ENCODE measurements at regions of chr6 and their contacts with region 1.

Region 1: DNA sequence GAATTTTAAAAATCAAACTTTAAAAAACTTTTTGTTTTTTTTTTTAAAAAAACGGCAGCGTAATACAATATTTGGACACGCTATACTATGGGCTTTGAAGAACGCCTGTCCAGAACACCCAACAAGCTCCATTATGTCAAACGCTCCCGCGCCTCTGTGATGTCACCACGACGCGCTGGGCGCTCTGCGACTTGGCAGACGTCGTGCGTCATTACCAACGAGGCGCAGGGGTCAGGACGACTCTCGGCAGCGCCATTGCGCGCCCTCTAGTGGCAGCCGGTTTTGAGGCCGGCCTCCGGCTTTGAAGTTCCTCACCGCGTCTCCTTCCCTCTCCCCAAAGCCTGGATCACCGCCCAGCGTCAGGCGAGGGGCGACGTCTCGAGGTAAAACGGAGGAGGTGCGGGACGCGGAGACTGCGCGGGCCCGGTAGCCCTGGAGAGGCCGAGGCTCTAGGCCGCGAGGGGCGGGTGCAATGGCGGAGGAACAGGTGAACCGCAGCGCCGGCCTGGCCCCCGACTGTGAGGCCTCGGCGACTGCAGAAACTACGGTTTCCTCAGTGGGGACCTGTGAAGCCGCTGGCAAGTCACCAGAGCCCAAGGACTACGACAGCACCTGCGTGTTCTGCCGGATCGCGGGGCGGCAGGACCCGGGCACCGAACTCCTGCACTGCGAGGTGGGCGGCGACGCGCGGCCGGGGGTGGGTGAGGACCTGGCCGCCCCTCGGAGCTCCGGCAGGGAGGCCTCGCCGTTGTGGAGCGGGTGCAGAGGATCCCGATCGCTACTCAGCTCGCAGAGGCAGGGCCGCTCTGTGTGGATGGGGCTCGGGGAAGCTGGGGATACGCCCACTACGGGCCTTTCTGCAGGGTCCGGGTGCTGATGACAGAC is at the start of gene HINT3:
- DNase-seq: peak; percentile 96 to 98 (median 97)
- H3K4me3 ChIP-seq: peak within 1 kb of the TSS; percentile 60 to 94
- H3K4me3 Mint-ChIP-seq: peak within 1 kb of the TSS in 2 of 8 donors; percentile 66 to 67
- H3K27ac ChIP-seq: peak within 1 kb of the TSS; percentile 95
- H3K27ac Mint-ChIP-seq: no peak within 1 kb of the TSS
- H3K4me1 ChIP-seq: peaks cover 44% of the 10 kb centered on the region
- H3K4me1 Mint-ChIP-seq: peaks cover 3 to 25% (median 7%) of the 10 kb centered on the region in 4 donors
- H3K27me3 ChIP-seq: no peaks in the 10 kb centered on the region
- H3K27me3 Mint-ChIP-seq: no peaks in the 10 kb centered on the region
- total RNA-seq, gene HINT3: 10.6 to 12.7 TPM

Region 2: DNA sequence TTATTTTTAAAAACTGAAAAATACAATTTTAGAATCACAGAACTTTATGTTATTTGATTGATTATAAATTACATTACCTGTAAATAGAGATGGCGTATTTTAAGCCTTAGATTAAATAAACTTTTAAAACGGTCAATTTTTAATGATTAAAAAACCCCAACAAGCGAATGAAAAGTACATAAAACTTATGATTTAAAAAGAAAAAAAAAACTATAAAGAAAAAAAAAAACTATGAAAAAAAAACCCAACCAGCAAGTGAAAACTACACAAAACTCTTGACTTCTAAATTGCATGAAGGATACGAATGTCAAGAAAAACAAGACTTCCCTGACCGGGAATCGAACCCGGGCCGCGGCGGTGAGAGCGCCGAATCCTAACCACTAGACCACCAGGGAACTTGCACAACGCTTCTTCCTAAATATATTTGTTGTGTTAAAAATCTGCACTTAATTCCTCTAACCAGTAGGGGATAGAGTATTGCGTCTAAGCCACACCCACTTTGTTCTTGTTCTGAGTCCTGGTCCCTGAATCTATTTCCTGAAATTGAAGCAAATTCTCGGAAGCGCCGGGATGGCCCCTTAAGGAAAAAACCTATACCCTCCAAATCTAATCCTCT is 176.7 kb before region 1 on chr6:
- CTCF ChIA-PET with region 1: interaction called, 78 read pairs
- POLR2A ChIA-PET with region 1: interaction called, 65 read pairs
- intact Hi-C with region 1: loop called (anchors 1 kb)
- DNase-seq: peak; percentile 87 to 94 (median 92)
- H3K4me3 ChIP-seq: peak overlapping the region; percentile 69 to 92
- H3K4me3 Mint-ChIP-seq: no peak overlapping the region
- H3K27ac ChIP-seq: peak overlapping the region; percentile 72
- H3K27ac Mint-ChIP-seq: no peak overlapping the region
- H3K4me1 ChIP-seq: peaks cover 17% of the 10 kb centered on the region
- H3K4me1 Mint-ChIP-seq: peaks cover 10 to 13% (median 12%) of the 10 kb centered on the region in 4 donors
- H3K27me3 ChIP-seq: no peaks in the 10 kb centered on the region
- H3K27me3 Mint-ChIP-seq: no peaks in the 10 kb centered on the region

Region 3: DNA sequence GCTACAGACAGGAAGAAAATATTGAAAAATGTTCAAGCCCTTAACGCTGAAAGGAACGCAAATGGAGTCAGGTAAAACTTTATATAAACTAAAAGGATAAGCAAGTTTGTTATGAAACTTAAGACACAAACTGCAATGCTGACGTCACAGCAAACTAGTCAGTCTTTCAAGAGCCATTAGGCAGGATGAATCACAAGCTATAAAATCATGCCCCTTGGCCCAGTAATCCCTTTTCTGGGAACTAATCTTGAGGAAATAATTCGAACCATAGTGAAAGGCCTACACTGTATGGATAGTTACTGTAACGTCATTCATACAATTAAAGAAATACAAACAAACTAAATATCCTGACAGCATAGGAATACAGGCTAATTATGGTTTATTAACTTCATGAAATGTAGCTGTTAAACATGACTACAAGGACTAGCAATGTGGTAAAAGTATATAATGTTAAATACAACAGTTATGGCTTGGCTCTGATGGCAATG is 42.8 kb before region 1 on chr6:
- CTCF ChIA-PET with region 1: interaction called, 34 read pairs
- POLR2A ChIA-PET with region 1: interaction called, 5 read pairs
- intact Hi-C with region 1: loop called (anchors 2 kb)
- DNase-seq: no peak
- H3K4me3 ChIP-seq: no peak overlapping the region
- H3K4me3 Mint-ChIP-seq: no peak overlapping the region
- H3K27ac ChIP-seq: no peak overlapping the region
- H3K27ac Mint-ChIP-seq: peak overlapping the region in 2 of 7 donors; percentile 0 to 27
- H3K4me1 ChIP-seq: peaks cover 8% of the 10 kb centered on the region
- H3K4me1 Mint-ChIP-seq: peaks cover 12 to 17% (median 16%) of the 10 kb centered on the region in 4 donors
- H3K27me3 ChIP-seq: no peaks in the 10 kb centered on the region
- H3K27me3 Mint-ChIP-seq: no peaks in the 10 kb centered on the region

Region 4: DNA sequence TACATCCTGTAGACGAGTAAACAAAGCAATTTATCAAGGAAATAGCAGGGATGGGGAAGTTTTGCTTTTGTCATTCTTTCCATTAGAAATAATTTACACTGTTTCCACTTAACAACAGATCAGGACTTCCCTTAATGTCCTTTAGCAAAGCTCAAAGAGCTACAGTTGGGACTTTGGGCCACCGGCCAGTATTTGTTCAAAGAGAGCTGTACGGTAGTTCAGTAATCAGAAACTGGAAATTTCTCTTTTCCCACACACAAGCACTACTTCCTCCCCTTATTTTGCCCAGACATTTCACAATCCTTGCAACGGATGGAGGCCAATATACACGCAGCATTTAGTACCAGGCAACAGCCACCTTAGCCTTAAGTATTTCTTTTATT is 12.3 kb before region 1 on chr6:
- CTCF ChIA-PET with region 1: interaction called, 31 read pairs
- POLR2A ChIA-PET with region 1: interaction called, 4 read pairs
- intact Hi-C with region 1: no loop called
- DNase-seq: no peak
- H3K4me3 ChIP-seq: no peak overlapping the region
- H3K4me3 Mint-ChIP-seq: no peak overlapping the region
- H3K27ac ChIP-seq: no peak overlapping the region
- H3K27ac Mint-ChIP-seq: no peak overlapping the region
- H3K4me1 ChIP-seq: no peaks in the 10 kb centered on the region
- H3K4me1 Mint-ChIP-seq: peaks cover 0 to 7% (median 5%) of the 10 kb centered on the region in 4 donors
- H3K27me3 ChIP-seq: no peaks in the 10 kb centered on the region
- H3K27me3 Mint-ChIP-seq: peaks cover 2 to 14% of the 10 kb centered on the region in 2 donors

Region 5: DNA sequence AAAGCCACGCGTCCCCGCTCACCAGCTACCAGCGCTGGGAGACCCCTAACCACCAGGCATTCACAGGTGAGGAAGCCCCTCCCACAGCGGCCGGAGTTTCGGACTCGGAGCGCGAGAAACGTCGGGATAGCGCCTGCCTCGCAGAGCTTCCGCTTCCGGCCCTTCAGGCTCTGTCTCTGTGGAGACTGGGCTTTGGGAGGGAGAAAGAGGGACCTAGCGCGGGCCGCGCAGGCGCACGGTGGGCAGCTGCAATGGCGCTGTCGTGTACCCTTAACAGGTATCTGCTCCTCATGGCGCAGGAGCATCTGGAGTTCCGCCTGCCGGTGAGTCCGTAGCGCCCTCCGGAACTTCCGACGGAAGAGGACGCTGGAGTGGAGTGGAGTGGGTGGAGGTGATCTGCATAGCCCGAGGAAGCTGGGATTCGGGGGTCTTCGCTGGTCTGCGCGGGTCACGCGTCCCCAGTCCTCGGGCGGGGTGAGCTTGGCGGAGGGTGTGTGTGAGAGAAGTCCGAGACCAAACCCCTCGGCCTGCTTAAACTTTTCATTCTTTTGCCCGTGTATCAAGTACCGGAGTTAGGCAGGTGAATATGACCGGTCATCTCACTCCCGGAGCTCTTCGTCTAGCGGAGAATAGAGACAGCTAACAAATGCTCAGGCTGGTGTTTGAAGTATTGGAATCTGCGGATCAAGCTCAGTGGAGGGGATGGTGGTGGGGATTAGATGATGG is 29.7 kb after region 1 on chr6 and contains the start of gene TRMT11:
- CTCF ChIA-PET with region 1: interaction called, 25 read pairs
- POLR2A ChIA-PET with region 1: interaction called, 46 read pairs
- intact Hi-C with region 1: loop called (anchors 1 kb)
- DNase-seq: peak; percentile 80 to 86 (median 81)
- H3K4me3 ChIP-seq: peak within 1 kb of the TSS; percentile 93 to 95
- H3K4me3 Mint-ChIP-seq: peak within 1 kb of the TSS; percentile 6 to 57 (median 24)
- H3K27ac ChIP-seq: peak within 1 kb of the TSS; percentile 77
- H3K27ac Mint-ChIP-seq: no peak within 1 kb of the TSS
- H3K4me1 ChIP-seq: peaks cover 31% of the 10 kb centered on the region
- H3K4me1 Mint-ChIP-seq: peaks cover 2 to 15% (median 8%) of the 10 kb centered on the region in 4 donors
- H3K27me3 ChIP-seq: no peaks in the 10 kb centered on the region
- H3K27me3 Mint-ChIP-seq: no peaks in the 10 kb centered on the region
- total RNA-seq, gene TRMT11: 25.5 to 30.8 TPM